Lower leg skin (tissue), 4 donors: ENCODE measurements at regions of chr17 and their contacts with region 1.

Region 1: DNA sequence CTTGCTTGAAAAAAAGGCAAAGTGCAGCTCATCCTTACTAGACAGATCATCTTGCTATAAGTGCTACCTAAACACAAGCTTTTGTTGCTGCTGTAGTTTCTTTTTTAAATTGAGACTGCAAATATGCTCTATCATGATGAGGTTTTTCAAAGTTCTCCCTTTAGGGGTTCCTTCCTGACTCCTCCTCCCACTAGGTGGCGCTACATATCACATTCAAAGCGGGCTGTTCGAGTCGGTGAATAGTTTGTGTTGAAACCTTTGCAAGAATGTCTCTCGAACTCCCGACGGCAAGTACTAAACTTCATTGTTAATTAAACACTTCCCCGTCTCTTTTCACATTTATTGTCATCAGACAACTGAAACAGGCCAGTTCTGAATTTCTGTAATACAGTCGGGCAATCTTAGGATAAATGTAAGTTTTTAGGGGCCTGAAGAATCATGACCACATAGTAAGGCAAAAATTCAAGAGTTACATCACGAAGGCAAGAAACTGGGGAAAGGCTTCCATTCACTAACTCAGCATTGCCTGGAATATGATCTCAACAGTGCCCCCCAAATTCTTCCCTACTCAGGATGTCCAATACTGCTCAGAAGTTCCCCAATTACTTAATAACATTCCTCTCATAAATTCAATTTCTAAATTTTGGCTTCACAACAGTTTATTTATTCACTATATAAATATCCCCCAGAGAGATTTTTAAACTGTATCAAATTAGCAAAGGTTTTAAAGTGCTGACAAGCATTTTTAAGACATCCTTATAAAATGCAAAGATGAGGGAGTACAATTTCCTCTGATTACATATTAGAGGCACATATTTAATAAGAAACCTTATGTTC is 6.7 kb downstream of the HS3ST3A1 start:
- DNase-seq: peak; percentile 77 to 91
- H3K4me3 ChIP-seq: no peak overlapping the region
- CTCF ChIP-seq: peak in 1 of 3 donors; percentile 68
- POLR2A ChIP-seq: no peak

Region 2: DNA sequence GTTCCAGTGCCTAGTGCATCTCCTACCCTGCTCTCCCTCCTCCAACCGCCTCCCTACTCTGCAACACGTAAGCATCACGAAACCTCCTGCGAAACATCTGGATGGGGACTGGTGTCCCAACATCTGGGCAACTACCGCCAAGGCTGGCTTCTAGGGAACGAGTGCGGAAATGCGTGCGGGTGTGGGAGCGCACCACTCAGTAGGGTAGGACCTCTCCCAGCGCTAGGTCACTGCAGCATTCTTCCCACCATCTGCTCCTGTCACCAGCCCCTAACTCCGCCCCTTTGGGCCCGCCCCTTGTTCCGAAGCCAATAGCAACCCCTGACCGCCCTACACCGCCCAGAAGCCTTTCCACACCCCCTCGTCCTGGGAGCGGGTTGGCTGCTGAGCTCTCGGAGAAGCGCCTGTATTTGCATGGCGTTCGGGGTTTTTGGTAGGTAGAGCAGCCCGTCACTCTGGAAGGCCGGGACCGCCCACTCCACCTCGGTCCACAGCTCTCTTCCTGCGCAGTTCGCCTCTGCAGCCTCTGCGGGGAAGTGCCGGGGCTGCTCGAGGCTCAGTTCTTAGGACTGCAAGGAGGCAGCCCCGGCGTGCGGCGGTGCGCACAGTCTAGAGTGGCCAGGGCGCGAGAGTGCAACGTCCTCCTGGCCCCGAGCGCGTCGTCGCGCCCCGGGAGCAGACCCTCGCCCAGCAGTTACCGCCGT is 705.7 kb after region 1 on chr17 and contains the start of gene HS3ST3B1:
- intact Hi-C with region 1: loop called (anchors 5 kb)
- DNase-seq: peak; percentile 99 to 100
- H3K4me3 ChIP-seq: peak within 1 kb of the TSS; percentile 50
- CTCF ChIP-seq: peak in 1 of 3 donors; percentile 33
- POLR2A ChIP-seq: no peak
- total RNA-seq, gene HS3ST3B1: 4.3 to 30.1 (median 15.5) TPM

Region 3: GRCh38 chr17:14926526-14927122 is 1331.6 kb after region 1 on chr17:
- intact Hi-C with region 1: loop called (anchors 10 kb)
- DNase-seq: peak in 1 of 2 donors; percentile 45
- H3K4me3 ChIP-seq: no peak overlapping the region
- CTCF ChIP-seq: peak in 1 of 3 donors; percentile 29
- POLR2A ChIP-seq: no peak